Activated T-helper 2 cell treated with anti-CD3 and anti-CD28 coated beads, Interferon-gamma antibody, Interleukin-2, Interleukin-4, amounts not matched to agents 10 μg/mL and 5 μg/mL and 100 μg/mL, durations not matched to agents 14 hours and 24 hours and 36 hours (primary cell): ENCODE measurements at regions of chr10 and their contacts with region 1.

Region 1: DNA sequence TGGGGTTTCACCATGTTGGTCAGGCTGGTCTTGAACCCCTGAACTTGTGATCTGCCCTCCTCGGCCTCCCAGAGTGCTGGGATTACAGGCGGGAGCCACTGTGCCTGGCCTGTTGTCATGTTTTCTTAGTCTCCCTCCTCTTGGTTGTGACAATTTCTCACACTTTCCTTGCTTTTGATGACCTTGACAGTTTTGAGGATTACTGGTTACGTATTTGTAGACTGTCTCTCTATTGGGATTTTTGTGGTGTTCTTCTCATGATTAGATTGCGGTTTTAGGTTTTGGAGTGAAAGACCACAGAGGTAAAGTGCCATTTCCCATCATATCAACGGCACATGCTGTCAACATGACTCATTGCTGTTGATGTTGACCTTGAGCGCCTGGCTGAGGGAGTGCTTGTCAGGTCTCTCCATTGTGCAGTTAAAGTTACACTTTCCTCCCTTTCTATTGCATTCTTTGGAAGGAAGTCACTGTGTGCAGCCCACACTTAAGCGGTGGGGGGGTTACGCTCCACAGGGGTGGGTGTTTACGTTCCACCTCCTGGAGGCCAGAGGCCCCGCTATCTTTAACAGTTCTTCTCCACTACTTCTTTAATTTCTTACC is 10.8 kb downstream of the NEURL1 start:
- DNase-seq: peak; percentile 39
- H3K4me3 Mint-ChIP-seq: no peak overlapping the region
- H3K27ac Mint-ChIP-seq: peak overlapping the region; percentile 47
- H3K4me1 Mint-ChIP-seq: peaks cover 35% of the 10 kb centered on the region
- H3K27me3 Mint-ChIP-seq: peaks cover 56% of the 10 kb centered on the region

Region 2: DNA sequence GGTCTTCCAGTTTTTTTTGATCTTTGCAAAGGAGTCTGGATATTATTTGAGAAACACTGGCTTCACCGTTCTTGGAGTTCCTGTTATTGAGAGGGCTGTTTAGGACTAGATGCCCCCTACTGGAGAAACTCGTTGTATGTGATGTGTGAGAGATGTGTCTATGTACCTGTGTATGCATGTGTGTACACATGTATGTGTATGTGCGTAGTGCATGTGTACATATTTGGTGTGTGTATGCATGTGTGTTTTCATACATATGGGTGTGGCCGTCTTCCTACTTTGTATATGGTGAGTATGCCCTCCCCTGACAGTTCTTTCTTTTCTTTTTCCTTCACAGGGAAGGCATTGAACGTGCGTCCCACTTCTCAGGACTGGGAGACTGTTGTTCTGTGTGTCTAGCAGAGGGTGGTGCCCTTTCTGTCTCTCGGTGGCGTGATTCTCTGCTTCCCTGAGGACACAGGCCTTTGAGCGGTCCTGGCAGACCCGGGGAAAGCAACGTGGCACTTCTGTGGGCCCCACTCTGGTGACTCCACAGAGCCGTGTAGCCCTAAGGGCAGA is 22.2 kb before region 1 on chr10:
- intact Hi-C with region 1: no loop called
- DNase-seq: no peak
- H3K4me3 Mint-ChIP-seq: no peak overlapping the region
- H3K27ac Mint-ChIP-seq: no peak overlapping the region
- H3K4me1 Mint-ChIP-seq: peaks cover 14% of the 10 kb centered on the region
- H3K27me3 Mint-ChIP-seq: peaks cover 2% of the 10 kb centered on the region

Region 3: DNA sequence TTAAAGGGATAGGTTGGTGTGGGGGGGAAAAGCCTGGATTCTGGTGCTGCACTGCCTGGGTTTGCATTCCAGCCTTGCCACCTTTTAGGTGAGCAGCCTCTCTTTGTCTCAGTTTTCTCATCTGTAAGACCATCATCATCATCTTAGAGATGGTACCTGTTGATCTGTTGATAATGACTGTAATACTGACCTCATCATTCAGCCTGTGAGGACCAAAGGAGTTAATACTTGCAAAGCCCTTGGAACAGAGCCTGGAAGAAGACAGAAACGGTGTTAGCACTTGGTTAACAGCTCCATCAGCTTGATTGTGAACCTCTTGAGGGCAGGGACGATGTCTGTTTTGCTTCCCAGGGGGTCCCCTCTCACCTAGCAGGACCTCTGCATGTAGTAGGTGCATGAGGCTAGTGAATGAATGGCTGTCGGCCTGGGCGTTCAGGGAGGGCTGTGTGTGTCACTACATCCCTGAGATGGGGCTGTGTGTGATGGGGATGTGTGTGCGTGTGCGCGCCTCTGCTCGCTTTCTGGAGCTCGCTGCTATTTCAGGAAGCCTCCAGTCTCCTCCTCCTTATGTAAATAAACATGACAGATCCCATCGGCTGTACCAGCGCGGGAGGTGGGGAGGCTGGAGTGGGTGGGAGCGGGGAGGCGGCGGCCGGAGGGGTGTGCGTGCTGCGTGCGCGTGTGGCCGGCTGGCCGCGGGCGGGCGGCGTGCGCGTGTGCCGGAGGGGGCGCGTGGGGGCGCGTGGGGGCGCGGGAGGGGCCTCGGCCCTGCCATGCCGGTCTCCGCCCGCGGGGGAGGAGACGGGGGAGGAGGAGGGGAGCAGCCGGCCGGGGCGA is 50.4 kb after region 1 on chr10:
- intact Hi-C with region 1: loop called (anchors 1 kb)
- DNase-seq: peak; percentile 17
- H3K4me3 Mint-ChIP-seq: peak overlapping the region; percentile 58
- H3K27ac Mint-ChIP-seq: no peak overlapping the region
- H3K4me1 Mint-ChIP-seq: peaks cover 24% of the 10 kb centered on the region
- H3K27me3 Mint-ChIP-seq: peaks cover 10% of the 10 kb centered on the region

Region 4: GRCh38 chr10:103659674-103660363 is 155.5 kb after region 1 on chr10:
- intact Hi-C with region 1: loop called (anchors 10 kb)
- DNase-seq: peak; percentile 65
- H3K4me3 Mint-ChIP-seq: peak overlapping the region; percentile 83
- H3K27ac Mint-ChIP-seq: peak overlapping the region; percentile 80
- H3K4me1 Mint-ChIP-seq: peaks cover 8% of the 10 kb centered on the region
- H3K27me3 Mint-ChIP-seq: no peaks in the 10 kb centered on the region